Activated naive CD4-positive, alpha-beta T cell treated with anti-CD3 and anti-CD28 coated beads for 36 hours (primary cell): ENCODE measurements at regions of chr19 and their contacts with region 1.

Region 1: GRCh38 chr19:30669329-30670010 is 297.3 kb downstream of the ZNF536 start:
- DNase-seq: peak; percentile 61
- H3K4me3 Mint-ChIP-seq: no peak overlapping the region
- H3K27ac Mint-ChIP-seq: no peak overlapping the region
- H3K4me1 Mint-ChIP-seq: no peaks in the 10 kb centered on the region
- H3K27me3 Mint-ChIP-seq: peaks cover 34% of the 10 kb centered on the region

Region 2: GRCh38 chr19:30682999-30683536 is 13.6 kb after region 1 on chr19:
- CTCF ChIA-PET with region 1: interaction called, 14 read pairs
- intact Hi-C with region 1: no loop called
- DNase-seq: peak; percentile 73
- H3K4me3 Mint-ChIP-seq: no peak overlapping the region
- H3K27ac Mint-ChIP-seq: no peak overlapping the region
- H3K4me1 Mint-ChIP-seq: no peaks in the 10 kb centered on the region
- H3K27me3 Mint-ChIP-seq: peaks cover 42% of the 10 kb centered on the region

Region 3: DNA sequence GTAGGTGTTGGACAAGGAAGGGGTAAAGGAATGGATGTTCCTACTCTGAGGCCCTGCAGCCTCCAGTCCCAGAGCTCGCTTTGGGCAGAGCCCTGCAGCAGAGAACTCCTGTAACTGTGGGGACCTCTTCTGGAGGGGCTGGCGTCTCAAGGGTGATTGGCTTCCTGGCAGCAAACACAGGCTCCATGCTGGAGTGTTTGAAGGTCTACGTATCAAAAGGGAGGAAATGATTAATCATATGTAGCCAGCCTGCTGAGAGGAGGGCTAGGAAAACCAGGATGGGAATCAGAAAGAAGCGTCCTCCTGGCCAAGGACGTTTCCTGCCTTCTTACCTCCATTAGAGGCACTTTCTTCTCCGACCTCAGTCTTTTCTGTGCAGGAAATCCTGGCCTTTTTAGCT is 471.2 kb after region 1 on chr19:
- CTCF ChIA-PET with region 1: no interaction called
- intact Hi-C with region 1: no loop called
- DNase-seq: no peak
- H3K4me3 Mint-ChIP-seq: no peak overlapping the region
- H3K27ac Mint-ChIP-seq: no peak overlapping the region
- H3K4me1 Mint-ChIP-seq: no peaks in the 10 kb centered on the region
- H3K27me3 Mint-ChIP-seq: peaks cover 7% of the 10 kb centered on the region